ENCODE measurements at regions of chr10 and their contacts with region 1.

Region 1: DNA sequence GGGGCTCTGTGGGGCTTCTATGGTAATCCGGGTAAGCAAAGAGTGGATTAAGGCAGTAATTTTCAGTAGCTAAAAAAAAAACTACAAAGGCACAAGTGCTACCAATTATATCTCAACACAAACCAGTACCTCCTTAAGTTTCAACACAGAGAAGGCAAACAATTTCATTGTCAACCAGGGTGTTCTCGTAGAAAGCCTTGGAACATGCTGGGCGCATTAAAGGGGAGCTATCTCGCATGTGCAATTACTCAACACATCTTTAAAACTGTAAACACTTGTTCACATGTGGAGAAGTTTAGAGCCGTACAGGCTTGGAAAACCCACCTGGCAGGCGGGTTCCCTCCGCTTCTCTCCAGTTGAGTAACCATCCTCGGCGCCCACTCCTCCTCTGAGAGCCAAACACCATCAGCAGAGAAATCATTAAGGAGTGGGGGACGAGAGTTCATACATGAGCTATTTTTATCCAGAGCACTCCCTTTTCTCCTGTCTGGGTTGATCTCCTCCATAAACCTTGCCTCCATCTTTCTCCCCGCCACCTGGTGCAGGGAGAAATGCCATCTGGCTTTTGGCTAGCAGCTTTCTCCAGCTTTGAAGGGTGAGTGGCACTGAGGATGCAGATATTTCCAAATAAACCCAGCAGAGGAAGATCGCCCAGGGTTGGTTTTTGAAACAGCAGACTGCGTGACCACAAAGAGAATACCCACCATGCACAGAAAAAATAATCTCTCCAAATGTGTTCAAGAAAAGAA is 287.1 kb downstream of the WDR11 start:
- DNase-seq: no peak
- H3K4me3 ChIP-seq: no peak overlapping the region
- H3K27ac ChIP-seq: peak overlapping the region in 3 of 4 donors; percentile 38 to 64 (median 57)
- H3K4me1 ChIP-seq: peaks cover 0 to 4% (median 4%) of the 10 kb centered on the region in 4 donors
- H3K27me3 ChIP-seq: no peaks in the 10 kb centered on the region
- CTCF ChIP-seq: no peak
- EP300 ChIP-seq: no peak
- POLR2A ChIP-seq: no peak

Region 2: DNA sequence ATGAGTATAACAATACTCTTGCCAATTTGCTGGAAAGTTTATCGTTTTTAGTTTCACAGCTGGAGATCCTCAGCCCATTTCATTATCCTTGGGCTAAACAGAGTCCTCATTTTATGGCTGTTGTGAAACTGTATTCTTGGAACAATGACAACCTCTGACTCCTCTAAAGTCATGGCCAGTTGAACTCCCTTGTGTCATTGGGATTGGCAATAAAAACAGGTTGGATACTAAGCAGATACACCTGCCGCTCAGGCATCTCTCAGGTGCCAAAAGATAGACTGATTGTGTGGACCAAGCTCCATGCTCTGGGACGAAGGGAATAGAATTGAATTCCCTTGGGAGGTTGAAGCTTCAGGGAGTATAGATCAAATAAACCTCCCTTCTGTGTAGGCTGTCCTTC is 104.9 kb before region 1 on chr10:
- in situ Hi-C with region 1: no loop called
- intact Hi-C with region 1: loop called (anchors 2 kb)
- DNase-seq: no peak
- H3K4me3 ChIP-seq: no peak overlapping the region
- H3K27ac ChIP-seq: peak overlapping the region; percentile 28 to 79 (median 54)
- H3K4me1 ChIP-seq: peaks cover 0 to 17% (median 4%) of the 10 kb centered on the region in 4 donors
- H3K27me3 ChIP-seq: no peaks in the 10 kb centered on the region
- CTCF ChIP-seq: no peak
- EP300 ChIP-seq: peak; percentile 69
- POLR2A ChIP-seq: no peak

Measured in transverse colon (tissue), 4 donors.